Dorsolateral prefrontal cortex (tissue), 120 donors: ENCODE measurements at regions of chr3 and their contacts with region 1.

Region 1: GRCh38 chr3:25648107-25648535 is 16.6 kb downstream of the TOP2B start:
- DNase-seq: peak in 6 of 10 donors; percentile 37 to 82 (median 50)
- H3K4me3 ChIP-seq: no peak overlapping the region
- H3K27ac ChIP-seq: peak overlapping the region in 3 of 59 donors; percentile 4 to 39 (median 22)
- H3K27me3 ChIP-seq: no peaks in the 10 kb centered on the region
- CTCF ChIP-seq: peak; percentile 61 to 98 (median 91)

Region 2: GRCh38 chr3:25782938-25783660 is 135.0 kb after region 1 on chr3 and contains the start of gene NGLY1:
- intact Hi-C with region 1: loop called in 1 of 2 experiments (anchors 5 kb)
- DNase-seq: peak; percentile 64 to 93 (median 80)
- H3K4me3 ChIP-seq: peak within 1 kb of the TSS; percentile 67 to 98 (median 92)
- H3K27ac ChIP-seq: peak within 1 kb of the TSS; percentile 24 to 93 (median 82)
- H3K27me3 ChIP-seq: no peaks in the 10 kb centered on the region
- CTCF ChIP-seq: peak in 27 of 56 donors; percentile 8 to 50 (median 31)
- total RNA-seq, gene NGLY1: 25.1 to 68.9 (median 36.2) TPM

Region 3: DNA sequence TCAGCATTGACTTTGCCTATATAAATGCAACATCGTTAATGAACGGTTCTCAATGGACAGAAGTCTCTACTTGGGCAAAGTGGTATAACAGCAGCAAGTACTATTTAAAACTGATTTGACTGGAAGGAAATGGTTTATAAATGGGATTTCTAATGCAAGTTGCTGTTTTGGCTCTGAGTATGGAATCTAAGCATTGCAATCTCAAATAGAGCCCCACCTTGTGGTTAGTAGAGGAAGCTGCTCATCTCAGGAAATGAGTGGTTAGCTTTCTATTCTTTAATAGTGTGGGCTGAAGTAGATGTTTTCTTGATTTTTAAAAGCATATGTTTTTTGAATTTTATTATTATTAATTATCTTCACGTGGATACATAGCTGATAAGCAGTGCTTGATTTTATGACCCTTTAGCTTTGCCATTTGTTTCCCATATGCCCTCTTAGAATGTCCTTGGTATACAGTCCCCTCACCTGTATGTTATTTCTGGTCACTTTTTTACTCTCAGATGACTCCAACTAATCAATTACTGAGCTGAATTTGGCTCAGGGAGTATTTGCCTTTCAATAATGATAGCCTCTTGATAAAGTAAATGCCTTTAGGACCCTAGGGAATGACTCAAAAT is 208.9 kb after region 1 on chr3:
- intact Hi-C with region 1: loop called (anchors 2 to 5 kb)
- DNase-seq: no peak
- H3K4me3 ChIP-seq: no peak overlapping the region
- H3K27ac ChIP-seq: no peak overlapping the region
- H3K27me3 ChIP-seq: no peaks in the 10 kb centered on the region
- CTCF ChIP-seq: peak in 55 of 56 donors; percentile 45 to 81 (median 66)